ENCODE measurements at regions of chr1 and their contacts with region 1.

Region 1: GRCh38 chr1:67685067-67685557 is at the start of gene GADD45A:
- DNase-seq: peak; percentile 99
- H3K4me3 Mint-ChIP-seq: peak within 1 kb of the TSS; percentile 87
- H3K27ac Mint-ChIP-seq: peak within 1 kb of the TSS; percentile 89
- H3K4me1 Mint-ChIP-seq: peaks cover 34% of the 10 kb centered on the region
- H3K27me3 Mint-ChIP-seq: no peaks in the 10 kb centered on the region
- CTCF ChIP-seq: no peak
- total RNA-seq, gene GADD45A: 183 and 225 TPM in 2 replicates

Region 2: DNA sequence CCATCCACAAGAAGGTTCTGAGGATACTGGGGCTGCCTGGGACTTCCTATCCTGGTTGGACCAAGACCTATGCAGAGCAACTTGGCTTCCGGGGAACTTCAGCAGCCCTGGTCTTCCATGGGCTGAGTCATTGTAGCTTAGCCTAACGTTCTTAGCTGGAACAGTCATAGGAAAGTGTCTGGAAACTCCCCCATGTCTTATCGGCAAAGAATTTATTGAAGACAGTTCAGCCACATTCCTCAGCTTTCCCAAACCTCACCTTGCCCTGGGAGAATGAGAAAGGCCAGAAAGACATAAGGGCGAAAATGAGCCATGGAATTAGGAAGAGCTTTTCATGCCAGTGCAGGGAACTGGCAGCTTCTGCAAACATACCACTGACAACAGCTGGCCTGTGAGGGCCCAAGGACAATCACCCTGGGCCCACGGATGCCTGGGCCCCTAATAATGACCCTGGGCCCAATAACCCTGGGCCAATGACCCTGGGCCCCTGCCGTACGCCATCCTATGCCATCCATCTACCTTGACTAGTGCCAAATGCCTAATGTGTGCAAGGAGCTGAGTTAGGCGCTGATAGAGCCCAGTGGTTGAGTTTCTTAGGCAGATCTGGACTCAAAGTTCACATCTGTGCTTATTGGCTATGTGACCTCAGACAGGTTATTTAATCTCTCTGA is 114.5 kb before region 1 on chr1:
- CTCF ChIA-PET with region 1: interaction called, 67 read pairs
- POLR2A ChIA-PET with region 1: interaction called, 142 read pairs
- intact Hi-C with region 1: no loop called
- DNase-seq: peak; percentile 80
- H3K4me3 Mint-ChIP-seq: no peak overlapping the region
- H3K27ac Mint-ChIP-seq: peak overlapping the region; percentile 76
- H3K4me1 Mint-ChIP-seq: peaks cover 48% of the 10 kb centered on the region
- H3K27me3 Mint-ChIP-seq: no peaks in the 10 kb centered on the region
- CTCF ChIP-seq: no peak

Region 3: GRCh38 chr1:67629370-67630075 is 55.6 kb before region 1 on chr1:
- CTCF ChIA-PET with region 1: no interaction called
- POLR2A ChIA-PET with region 1: interaction called, 19 read pairs
- intact Hi-C with region 1: no loop called
- DNase-seq: peak; percentile 71
- H3K4me3 Mint-ChIP-seq: no peak overlapping the region
- H3K27ac Mint-ChIP-seq: no peak overlapping the region
- H3K4me1 Mint-ChIP-seq: peaks cover 30% of the 10 kb centered on the region
- H3K27me3 Mint-ChIP-seq: no peaks in the 10 kb centered on the region
- CTCF ChIP-seq: no peak

Region 4: DNA sequence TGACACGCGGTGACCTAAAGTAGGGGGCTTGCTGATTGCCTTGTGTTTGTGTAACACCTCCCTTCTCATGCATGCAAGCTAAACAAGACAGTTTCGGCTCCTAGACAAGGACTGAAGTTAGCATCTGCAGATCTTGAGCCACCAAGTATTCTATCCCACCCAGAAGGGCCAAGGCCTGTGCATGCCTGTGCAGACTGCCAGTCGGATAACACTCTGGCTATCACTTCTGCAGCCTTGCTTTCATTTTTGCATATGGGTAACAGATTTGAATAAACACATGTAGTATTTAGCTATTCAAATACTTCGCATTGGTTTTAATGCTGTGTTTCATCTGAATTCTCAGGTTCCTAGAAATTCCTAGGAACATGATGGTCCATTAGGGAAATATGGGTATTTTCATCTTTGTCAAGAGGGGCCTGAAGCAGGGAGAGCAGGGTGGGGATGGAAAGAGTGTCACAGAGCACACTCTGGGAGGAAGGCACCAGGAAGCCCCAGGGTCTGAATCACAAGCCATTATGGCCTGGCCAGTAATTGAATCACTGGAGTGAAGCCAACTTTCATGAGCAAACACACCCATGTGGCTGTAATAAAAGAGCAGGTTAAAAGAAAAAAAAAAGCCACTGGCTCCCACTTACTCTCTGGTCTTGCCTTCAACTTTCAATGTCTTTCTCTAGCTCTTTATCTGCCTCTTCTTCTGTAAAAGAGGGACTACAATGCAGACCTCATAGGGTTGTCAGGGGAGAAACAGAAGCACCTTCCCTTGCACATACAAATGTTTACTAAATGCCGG is 28.1 kb after region 1 on chr1:
- CTCF ChIA-PET with region 1: interaction called, 4 read pairs
- POLR2A ChIA-PET with region 1: interaction called, 130 read pairs
- intact Hi-C with region 1: loop called (anchors 1 kb)
- DNase-seq: peak; percentile 85
- H3K4me3 Mint-ChIP-seq: no peak overlapping the region
- H3K27ac Mint-ChIP-seq: peak overlapping the region; percentile 87
- H3K4me1 Mint-ChIP-seq: peaks cover 52% of the 10 kb centered on the region
- H3K27me3 Mint-ChIP-seq: no peaks in the 10 kb centered on the region
- CTCF ChIP-seq: no peak

Region 5: GRCh38 chr1:67748630-67749029 is 63.5 kb after region 1 on chr1:
- CTCF ChIA-PET with region 1: interaction called, 12 read pairs
- POLR2A ChIA-PET with region 1: interaction called, 446 read pairs
- intact Hi-C with region 1: loop called (anchors 1 kb)
- DNase-seq: peak; percentile 79
- H3K4me3 Mint-ChIP-seq: peak overlapping the region; percentile 65
- H3K27ac Mint-ChIP-seq: peak overlapping the region; percentile 89
- H3K4me1 Mint-ChIP-seq: peaks cover 58% of the 10 kb centered on the region
- H3K27me3 Mint-ChIP-seq: no peaks in the 10 kb centered on the region
- CTCF ChIP-seq: no peak

Region 6: GRCh38 chr1:67814121-67814772 is 129.1 kb after region 1 on chr1:
- CTCF ChIA-PET with region 1: no interaction called
- POLR2A ChIA-PET with region 1: interaction called, 10 read pairs
- intact Hi-C with region 1: no loop called
- DNase-seq: no peak
- H3K4me3 Mint-ChIP-seq: no peak overlapping the region
- H3K27ac Mint-ChIP-seq: peak overlapping the region; percentile 94
- H3K4me1 Mint-ChIP-seq: peaks cover 54% of the 10 kb centered on the region
- H3K27me3 Mint-ChIP-seq: no peaks in the 10 kb centered on the region
- CTCF ChIP-seq: no peak

Measured in MCF 10A (cell line).